ENCODE measurements at regions of chr19 and their contacts with region 1.

Region 1: GRCh38 chr19:58305065-58305931 is at the start of gene ERVK3-1:
- DNase-seq: peak; percentile 93
- H3K4me3 Mint-ChIP-seq: peak within 1 kb of the TSS; percentile 98
- H3K27ac Mint-ChIP-seq: peak within 1 kb of the TSS; percentile 97
- H3K4me1 Mint-ChIP-seq: peaks cover 37% of the 10 kb centered on the region
- H3K27me3 Mint-ChIP-seq: no peaks in the 10 kb centered on the region
- total RNA-seq, gene ERVK3-1: 64.2 and 65.0 TPM in 2 replicates

Region 2: GRCh38 chr19:58228585-58229254 is 76.6 kb before region 1 on chr19 and contains the start of gene ZNF544:
- intact Hi-C with region 1: loop called (anchors 2 kb)
- DNase-seq: peak; percentile 52
- H3K4me3 Mint-ChIP-seq: peak within 1 kb of the TSS; percentile 92
- H3K27ac Mint-ChIP-seq: peak within 1 kb of the TSS; percentile 91
- H3K4me1 Mint-ChIP-seq: peaks cover 13% of the 10 kb centered on the region
- H3K27me3 Mint-ChIP-seq: no peaks in the 10 kb centered on the region
- total RNA-seq, gene ZNF544: 42.0 and 49.1 TPM in 2 replicates

Region 3: DNA sequence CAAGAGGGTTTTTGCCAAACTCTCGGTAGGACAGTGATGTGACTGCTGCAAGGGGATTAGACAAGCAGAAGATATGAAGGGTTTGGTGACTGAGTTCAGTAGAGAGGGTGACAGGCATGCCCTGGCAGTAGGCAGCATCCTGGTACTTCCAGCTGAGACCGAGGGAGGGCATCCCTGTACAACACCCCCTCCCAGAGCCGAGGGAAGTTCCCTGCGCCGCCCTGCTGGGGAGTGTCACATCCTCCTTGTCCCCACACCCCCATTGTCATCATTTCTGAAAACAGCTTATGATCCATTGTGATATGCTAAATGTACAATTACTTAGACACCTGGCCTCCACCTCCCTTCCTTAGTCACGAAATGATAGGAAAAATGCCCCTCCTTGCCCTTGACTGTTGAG is 61.9 kb before region 1 on chr19:
- intact Hi-C with region 1: no loop called
- DNase-seq: no peak
- H3K4me3 Mint-ChIP-seq: no peak overlapping the region
- H3K27ac Mint-ChIP-seq: no peak overlapping the region
- H3K4me1 Mint-ChIP-seq: no peaks in the 10 kb centered on the region
- H3K27me3 Mint-ChIP-seq: no peaks in the 10 kb centered on the region

Region 4: GRCh38 chr19:58261968-58262921 is 43.1 kb before region 1 on chr19:
- intact Hi-C with region 1: no loop called
- DNase-seq: no peak
- H3K4me3 Mint-ChIP-seq: no peak overlapping the region
- H3K27ac Mint-ChIP-seq: no peak overlapping the region
- H3K4me1 Mint-ChIP-seq: no peaks in the 10 kb centered on the region
- H3K27me3 Mint-ChIP-seq: no peaks in the 10 kb centered on the region

Region 5: GRCh38 chr19:58278157-58279041 is 26.9 kb before region 1 on chr19 and contains the start of gene ZNF8:
- intact Hi-C with region 1: loop called (anchors 1 kb)
- DNase-seq: peak; percentile 96
- H3K4me3 Mint-ChIP-seq: peak within 1 kb of the TSS; percentile 94
- H3K27ac Mint-ChIP-seq: peak within 1 kb of the TSS; percentile 94
- H3K4me1 Mint-ChIP-seq: peaks cover 21% of the 10 kb centered on the region
- H3K27me3 Mint-ChIP-seq: no peaks in the 10 kb centered on the region
- total RNA-seq, gene ZNF8: 4.7 and 5.3 TPM in 2 replicates

Region 6: DNA sequence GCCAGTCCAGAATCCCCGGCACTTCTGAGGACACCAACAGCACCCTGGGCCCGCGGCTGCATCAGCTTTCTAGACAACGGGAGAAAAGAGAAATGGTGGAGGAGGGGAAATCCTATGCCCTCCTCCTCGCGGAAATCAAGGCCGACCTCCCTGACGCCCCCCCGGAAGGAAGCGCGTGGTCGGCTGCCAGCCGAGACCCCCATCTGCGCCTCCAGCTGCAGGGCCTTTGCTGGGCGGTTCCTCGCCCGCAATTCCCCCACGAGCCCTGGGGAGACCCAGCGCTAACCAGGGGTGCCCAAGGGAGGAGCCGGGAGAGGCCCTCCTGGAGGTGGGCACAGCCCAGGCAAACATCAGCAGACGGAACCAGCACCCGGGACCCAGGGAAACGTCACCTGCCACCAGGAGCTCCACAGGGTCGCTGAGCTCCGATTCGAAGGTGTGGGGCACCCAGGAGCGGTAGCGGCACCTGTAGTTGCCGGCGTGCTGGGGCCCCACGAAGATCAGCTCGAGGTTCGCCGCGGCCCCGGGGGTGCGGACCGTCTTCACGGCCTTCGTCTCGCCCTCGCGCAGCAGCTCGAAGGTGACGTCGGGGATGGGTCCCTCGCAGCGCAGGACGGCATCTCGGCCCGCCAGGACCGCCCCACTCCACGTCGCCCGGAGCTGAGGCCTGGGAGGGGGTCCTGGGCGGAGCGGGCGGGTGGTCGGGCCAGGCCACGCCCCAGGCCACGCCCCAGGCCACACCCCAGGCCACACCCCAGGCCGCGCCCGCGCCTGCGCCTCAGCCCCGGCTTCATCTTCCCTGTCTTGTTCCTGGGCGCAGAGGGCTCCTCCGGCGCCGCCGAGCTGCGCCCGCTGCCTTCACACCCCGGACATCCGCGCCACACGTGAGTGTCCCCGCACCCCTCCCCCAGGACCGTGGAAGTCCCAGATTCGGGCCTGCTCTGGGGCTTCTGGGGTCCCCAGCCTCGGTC is 41.9 kb after region 1 on chr19:
- intact Hi-C with region 1: loop called (anchors 5 kb)
- DNase-seq: peak; percentile 60
- H3K4me3 Mint-ChIP-seq: peak overlapping the region; percentile 95
- H3K27ac Mint-ChIP-seq: peak overlapping the region; percentile 71
- H3K4me1 Mint-ChIP-seq: peaks cover 15% of the 10 kb centered on the region
- H3K27me3 Mint-ChIP-seq: no peaks in the 10 kb centered on the region

Region 7: DNA sequence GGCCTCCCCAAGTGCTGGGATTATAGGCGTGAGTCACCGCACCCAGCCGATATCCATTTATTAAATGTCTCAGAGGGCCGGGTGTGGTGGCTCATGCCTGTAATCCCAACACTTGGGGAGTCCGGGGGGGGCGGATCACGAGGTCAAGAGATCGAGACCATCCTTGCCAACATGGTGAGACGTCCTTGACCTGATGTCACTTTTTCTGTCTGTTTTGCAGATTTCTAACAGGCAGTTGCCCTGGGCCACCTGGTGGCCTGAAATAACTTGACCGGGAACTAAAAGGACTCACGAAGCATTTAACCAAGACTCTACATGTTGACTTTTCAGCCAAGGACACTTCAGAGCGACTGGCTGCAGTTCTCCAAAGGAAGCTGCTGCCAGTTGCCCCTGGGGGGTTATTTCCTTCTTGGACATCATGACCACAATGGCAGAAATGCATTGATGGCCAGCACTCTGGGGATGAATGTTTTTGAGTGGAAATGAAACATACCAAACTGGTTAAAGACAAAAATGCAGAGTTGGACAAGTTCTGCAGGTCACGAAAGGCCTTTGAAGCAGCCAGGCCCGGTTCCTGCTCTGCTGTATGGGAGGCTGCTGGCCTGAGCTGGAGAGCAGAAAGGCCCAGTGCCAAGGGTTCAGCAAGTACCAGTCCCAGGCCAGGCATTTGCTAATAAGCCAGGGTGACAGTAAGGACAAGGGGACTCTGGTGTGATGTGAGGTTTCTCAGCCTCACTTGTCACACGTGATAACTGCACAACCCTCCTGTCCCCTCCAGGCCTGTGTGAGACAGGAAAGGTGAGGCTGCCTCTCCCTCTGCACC is 67.2 kb after region 1 on chr19:
- intact Hi-C with region 1: no loop called
- DNase-seq: no peak
- H3K4me3 Mint-ChIP-seq: no peak overlapping the region
- H3K27ac Mint-ChIP-seq: no peak overlapping the region
- H3K4me1 Mint-ChIP-seq: no peaks in the 10 kb centered on the region
- H3K27me3 Mint-ChIP-seq: no peaks in the 10 kb centered on the region